GM10248 (cell line): ENCODE measurements at regions of chr18 and their contacts with region 1.

Region 1: DNA sequence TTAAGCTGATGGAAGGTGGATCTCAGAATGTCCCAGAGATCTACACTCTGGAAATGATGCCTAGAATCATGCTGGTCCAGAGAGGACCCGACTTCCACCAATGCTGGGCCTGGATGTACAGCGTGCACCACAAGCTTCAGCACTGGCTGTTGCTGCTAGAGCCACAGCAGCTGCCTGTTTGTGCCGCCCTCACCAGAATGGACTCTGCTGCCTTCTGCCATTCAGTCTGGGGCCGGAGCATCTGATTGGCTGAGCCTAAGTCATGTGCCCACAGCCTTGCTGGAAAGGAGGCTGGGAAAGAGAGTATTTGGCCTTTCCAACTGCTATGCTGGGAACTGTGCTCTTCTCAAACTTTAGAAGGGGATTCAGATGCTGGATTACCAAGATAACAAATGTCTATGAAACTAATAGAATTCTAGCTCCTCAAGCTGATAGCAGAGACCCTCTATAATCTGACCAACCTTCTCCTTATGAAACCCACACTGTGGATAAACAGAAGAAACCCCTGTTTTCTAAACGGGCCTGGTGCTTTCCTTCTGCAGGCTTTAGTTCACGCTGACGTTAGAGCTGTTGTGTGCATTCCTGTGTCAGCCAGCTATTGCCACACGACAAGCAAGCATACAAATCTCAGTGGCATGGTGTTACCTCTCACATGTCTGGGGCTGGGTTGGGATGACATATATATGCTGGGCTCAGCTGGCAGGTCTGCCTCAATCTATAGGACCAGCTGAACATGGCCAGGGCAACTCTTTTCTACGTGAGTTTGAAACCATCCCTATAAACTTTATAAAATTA is 4.1 kb upstream of the LOXHD1 start:
- DNase-seq: no peak
- CTCF ChIP-seq: no peak

Region 2: GRCh38 chr18:46141199-46141598 is 520.0 kb before region 1 on chr18:
- CTCF ChIA-PET with region 1: interaction called, 148 read pairs
- POLR2A ChIA-PET with region 1: no interaction called
- DNase-seq: no peak
- CTCF ChIP-seq: no peak

Region 3: GRCh38 chr18:46158498-46158897 is 502.7 kb before region 1 on chr18:
- CTCF ChIA-PET with region 1: interaction called, 148 read pairs
- POLR2A ChIA-PET with region 1: no interaction called
- DNase-seq: no peak
- CTCF ChIP-seq: no peak

Region 4: DNA sequence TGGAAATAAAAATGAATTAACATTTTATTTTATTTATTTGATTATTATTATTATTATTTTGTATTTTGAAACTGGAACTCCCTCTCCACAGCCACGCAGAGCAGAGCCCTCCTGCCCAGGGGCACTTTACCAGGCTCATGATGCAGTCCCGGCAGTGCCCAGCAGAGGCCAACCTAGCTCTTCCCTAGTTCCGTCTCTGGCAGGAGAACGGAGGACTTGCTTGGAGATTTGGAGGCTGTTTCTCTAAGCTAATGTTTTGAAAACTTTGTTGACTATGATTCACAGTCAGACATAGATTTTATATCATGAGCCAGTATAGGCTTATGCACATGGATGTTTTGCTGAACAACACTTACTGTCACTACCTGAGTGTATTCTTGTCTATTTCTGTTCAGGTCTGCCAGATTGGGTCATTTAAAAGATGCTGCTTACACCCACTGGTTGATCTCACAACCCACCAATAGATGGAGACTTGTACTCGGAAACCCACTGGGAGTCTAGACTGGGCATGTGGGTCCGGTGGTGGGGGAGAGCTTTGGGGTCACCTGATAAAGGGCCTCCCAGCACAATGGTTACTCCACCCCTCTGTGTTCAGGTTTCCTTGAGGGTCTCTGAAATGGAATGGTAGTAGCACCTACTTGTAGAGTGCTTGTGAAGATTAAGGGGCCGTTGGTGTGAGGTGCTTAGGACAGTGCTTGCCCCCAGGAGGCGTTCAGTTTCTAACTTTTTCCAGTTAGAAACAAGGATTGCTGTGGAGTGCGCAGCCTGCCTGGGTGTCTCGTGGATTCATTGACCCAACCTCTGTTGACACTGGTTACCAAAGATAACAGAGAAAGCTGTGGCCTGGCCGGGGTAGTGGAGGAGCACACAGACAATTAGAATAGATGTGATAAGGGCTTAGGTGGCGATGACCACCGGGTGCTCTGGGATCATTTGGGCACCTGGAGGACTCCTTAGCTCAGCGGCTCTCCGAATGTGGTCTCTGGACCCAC is 379.7 kb before region 1 on chr18:
- CTCF ChIA-PET with region 1: interaction called, 71 read pairs
- POLR2A ChIA-PET with region 1: no interaction called
- DNase-seq: peak; percentile 71
- CTCF ChIP-seq: peak; percentile 90

Region 5: GRCh38 chr18:46639386-46639785 is 21.8 kb before region 1 on chr18:
- CTCF ChIA-PET with region 1: interaction called, 11 read pairs
- POLR2A ChIA-PET with region 1: no interaction called
- DNase-seq: no peak
- CTCF ChIP-seq: no peak

Region 6: DNA sequence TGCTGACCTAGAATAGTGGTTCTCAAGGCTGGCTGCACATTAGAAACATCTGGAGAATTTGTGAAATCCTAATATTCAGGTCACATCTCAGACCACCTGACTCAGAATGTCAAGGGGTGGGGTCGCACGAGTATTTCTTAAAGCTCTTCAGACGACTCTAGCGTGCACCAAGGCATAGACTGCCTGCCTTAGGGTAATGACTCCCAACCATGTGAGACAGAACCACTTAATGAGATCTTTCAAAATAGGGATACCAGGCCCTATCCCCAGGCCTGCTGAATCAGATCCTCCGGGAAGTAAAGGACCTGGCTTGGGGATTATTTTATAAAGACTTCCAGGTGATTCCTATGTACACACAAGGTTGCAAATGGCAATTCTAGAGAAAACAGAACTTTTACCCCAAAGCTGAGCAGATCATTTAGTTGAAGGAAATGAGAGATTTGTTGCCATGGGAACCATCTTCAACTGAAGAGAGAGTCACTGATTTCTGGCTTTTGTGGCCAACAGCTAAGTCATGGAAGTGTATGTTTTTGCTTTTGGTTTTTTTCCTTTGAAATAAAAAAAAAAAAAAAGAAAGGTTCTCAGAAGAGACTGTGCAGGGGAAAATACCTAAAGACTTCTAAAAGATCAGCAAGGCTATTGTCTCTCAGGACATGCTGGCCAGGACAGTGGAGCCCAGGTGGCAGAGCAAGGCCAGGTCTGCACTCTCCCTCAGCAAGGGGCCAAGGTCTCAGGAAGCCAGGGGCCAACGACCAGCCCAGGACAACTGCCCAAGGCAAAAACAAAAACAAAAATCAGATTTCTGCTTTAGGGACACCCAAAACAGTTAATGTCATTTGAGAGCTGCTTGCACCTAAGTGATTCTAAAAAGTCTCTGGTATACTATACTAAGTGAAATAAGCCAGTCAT is 11.2 kb after region 1 on chr18:
- CTCF ChIA-PET with region 1: interaction called, 33 read pairs
- POLR2A ChIA-PET with region 1: no interaction called
- DNase-seq: no peak
- CTCF ChIP-seq: no peak